Prostate gland (tissue), 2 donors: ENCODE measurements at regions of chr7 and their contacts with region 1.

Region 1: GRCh38 chr7:117715784-117716445 is 157.3 kb downstream of the CTTNBP2 start:
- DNase-seq: peak; percentile 63
- H3K4me3 ChIP-seq: no peak overlapping the region
- H3K27ac ChIP-seq: no peak overlapping the region
- H3K4me1 ChIP-seq: no peaks in the 10 kb centered on the region
- H3K27me3 ChIP-seq: no peaks in the 10 kb centered on the region
- CTCF ChIP-seq: peak; percentile 14 to 73 (median 54)
- POLR2A ChIP-seq: no peak

Region 2: GRCh38 chr7:117157241-117158209 is 558.4 kb before region 1 on chr7:
- intact Hi-C with region 1: no loop called
- DNase-seq: no peak
- H3K4me3 ChIP-seq: no peak overlapping the region
- H3K27ac ChIP-seq: no peak overlapping the region
- H3K4me1 ChIP-seq: no peaks in the 10 kb centered on the region
- H3K27me3 ChIP-seq: no peaks in the 10 kb centered on the region
- CTCF ChIP-seq: no peak
- POLR2A ChIP-seq: no peak

Region 3: GRCh38 chr7:117399820-117400422 is 316.0 kb before region 1 on chr7:
- intact Hi-C with region 1: loop called (anchors 5 kb)
- DNase-seq: no peak
- H3K4me3 ChIP-seq: no peak overlapping the region
- H3K27ac ChIP-seq: no peak overlapping the region
- H3K4me1 ChIP-seq: no peaks in the 10 kb centered on the region
- H3K27me3 ChIP-seq: no peaks in the 10 kb centered on the region
- CTCF ChIP-seq: peak; percentile 17 to 66 (median 48)
- POLR2A ChIP-seq: no peak

Region 4: GRCh38 chr7:117458977-117459583 is 256.8 kb before region 1 on chr7:
- intact Hi-C with region 1: loop called (anchors 5 kb)
- DNase-seq: no peak
- H3K4me3 ChIP-seq: no peak overlapping the region
- H3K27ac ChIP-seq: no peak overlapping the region
- H3K4me1 ChIP-seq: no peaks in the 10 kb centered on the region
- H3K27me3 ChIP-seq: no peaks in the 10 kb centered on the region
- CTCF ChIP-seq: peak; percentile 28 to 84 (median 72)
- POLR2A ChIP-seq: no peak